ENCODE measurements at regions of chr5 and their contacts with region 1.

Region 1: DNA sequence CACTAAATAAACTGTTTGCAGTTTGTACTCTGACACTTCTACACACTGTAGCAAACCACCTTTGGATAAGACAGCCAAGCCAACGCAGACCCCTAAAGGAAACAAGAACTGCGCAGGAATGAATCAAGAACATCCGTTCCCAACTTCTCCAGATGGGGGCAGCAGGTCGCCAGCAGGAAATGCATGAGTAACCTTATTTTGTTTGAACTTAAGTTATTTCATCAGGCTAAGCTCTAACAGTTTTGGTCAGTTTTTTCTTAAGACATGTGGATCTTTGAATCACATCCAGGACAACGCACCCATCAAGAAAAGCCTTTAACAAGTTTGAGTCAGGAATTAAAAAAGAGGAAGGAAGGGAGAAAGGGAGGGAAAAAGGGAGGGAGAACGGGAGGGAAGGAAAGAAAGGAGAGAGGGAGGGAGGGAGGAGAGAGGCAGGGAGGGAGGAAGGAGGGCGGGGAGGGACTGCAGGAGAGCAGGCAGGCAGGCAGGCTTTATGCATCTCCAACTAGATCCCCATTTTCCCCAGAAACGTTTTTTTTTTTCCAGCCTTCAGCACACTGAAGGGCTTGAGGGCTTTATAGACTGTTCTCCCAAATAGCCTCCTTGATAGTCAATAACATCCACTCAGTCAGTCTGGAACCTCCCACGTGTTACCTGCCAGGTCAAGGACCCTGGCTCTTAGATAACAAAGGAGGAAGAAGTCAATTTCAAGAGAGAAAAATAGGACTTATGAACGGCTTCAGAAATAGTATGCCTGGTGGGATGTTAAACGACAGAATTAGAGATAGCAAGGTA is 22.2 kb downstream of the BHMT start:
- DNase-seq: no peak
- ATAC-seq: peak; percentile 82

Region 2: DNA sequence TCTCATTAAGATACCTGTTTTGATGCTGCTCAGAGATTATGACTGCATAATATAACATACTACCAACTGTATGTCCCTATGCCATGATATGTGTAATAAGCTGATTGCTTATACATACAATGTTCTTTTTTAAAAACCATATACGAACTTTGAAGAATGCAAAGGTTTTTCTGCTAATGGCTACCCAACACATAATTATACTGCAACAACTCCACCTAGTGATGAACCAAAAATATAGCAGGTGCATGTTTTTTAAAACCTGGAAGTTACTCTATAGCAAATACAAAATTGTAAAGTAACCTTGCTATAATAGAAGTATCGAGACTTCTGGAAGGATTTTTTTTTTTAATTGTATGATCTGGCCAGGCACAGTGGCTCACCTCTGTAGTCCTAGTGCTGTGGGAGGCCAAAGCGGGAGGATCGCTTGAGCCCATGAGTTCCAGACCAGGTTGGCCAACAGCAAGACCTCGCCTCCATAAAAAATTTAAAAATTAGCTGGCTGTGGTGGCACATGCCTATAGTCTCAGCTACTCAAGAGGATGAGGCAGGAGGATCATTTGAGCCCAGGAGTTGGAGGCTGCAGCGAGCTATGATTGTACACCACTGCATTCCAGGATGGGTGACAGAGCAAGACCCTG is 331.0 kb after region 1 on chr5:
- intact Hi-C with region 1: loop called (anchors 5 kb)
- DNase-seq: no peak
- ATAC-seq: peak; percentile 20

Region 3: DNA sequence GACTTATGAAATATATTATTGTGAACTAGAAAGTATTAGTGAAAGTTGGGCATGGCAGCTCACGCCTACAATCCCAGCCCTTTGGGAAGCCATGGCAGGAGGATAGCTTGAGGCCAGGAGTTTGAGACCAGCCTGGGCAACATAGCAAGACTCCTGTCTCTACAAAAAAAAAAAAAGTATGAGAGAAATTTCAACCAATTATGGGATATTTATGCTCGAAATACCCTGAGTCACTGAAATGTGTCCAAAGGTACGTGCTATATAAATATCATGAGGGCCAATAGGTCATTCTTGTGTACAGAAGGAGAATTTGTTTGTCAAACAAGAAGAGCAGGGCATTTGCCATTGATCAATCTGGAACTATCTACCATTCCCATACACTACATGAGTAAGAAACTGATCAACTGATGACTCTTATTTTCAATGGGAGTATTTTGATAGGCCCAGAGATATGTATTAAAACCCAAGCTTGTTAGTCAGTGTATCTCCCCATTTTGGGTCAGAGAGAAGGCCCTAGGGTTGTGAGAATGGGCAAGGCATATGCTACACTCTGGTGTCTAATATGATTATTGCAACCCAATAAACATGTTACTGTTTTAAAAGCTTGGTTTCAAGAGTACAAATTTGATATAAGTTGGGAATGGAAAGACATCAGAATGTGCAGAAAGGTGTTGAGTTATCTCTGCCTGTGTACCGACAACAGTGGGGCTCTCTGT is 401.8 kb after region 1 on chr5:
- intact Hi-C with region 1: loop called (anchors 2 kb)
- DNase-seq: no peak
- ATAC-seq: no peak

Measured in Right ventricle myocardium inferior (tissue), 1 donor.